Gastrocnemius medialis (tissue), 4 donors: ENCODE measurements at regions of chr2 and their contacts with region 1.

Region 1: GRCh38 chr2:213157242-213157641 is 5.8 kb upstream of the IKZF2 start:
- DNase-seq: no peak
- ATAC-seq: no peak
- H3K4me3 ChIP-seq: no peak overlapping the region
- H3K27ac ChIP-seq: no peak overlapping the region
- H3K4me1 ChIP-seq: peaks cover 7 to 12% of the 10 kb centered on the region in 2 donors
- H3K27me3 ChIP-seq: no peaks in the 10 kb centered on the region
- CTCF ChIP-seq: no peak
- POLR2A ChIP-seq: no peak

Region 2: DNA sequence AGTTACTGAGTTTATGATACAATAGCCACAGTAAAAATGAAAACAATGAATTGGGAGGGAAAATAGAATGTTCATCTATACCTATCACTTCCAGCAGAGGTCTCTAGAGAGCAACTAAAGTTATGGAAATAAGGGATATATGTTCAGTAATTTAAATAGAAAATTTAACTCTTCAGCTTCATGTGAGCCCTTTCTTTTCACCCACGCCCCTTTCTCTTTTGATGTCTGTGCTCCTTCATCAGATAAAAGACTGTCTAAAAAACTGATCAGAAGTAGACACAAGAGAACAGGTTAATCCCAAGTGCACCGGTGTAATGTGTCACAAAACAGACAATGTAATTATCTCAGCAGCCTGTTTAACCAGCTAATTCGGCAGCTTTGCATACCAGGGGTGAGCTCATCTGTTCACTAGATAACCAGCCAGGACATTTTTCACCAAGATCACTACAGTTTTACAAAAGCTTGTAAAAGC is 380.2 kb before region 1 on chr2:
- in situ Hi-C with region 1: loop called (anchors 5 to 10 kb)
- intact Hi-C with region 1: no loop called
- DNase-seq: no peak
- ATAC-seq: no peak
- H3K4me3 ChIP-seq: peak overlapping the region in 1 of 4 donors; percentile 22
- H3K27ac ChIP-seq: no peak overlapping the region
- H3K4me1 ChIP-seq: no peaks in the 10 kb centered on the region
- H3K27me3 ChIP-seq: no peaks in the 10 kb centered on the region
- CTCF ChIP-seq: peak in 4 of 5 experiments; percentile 48 to 66 (median 63)
- POLR2A ChIP-seq: no peak

Region 3: GRCh38 chr2:212863185-212863588 is 294.1 kb before region 1 on chr2:
- in situ Hi-C with region 1: no loop called
- intact Hi-C with region 1: loop called (anchors 2 kb)
- DNase-seq: no peak
- ATAC-seq: no peak
- H3K4me3 ChIP-seq: no peak overlapping the region
- H3K27ac ChIP-seq: no peak overlapping the region
- H3K4me1 ChIP-seq: no peaks in the 10 kb centered on the region
- H3K27me3 ChIP-seq: no peaks in the 10 kb centered on the region
- CTCF ChIP-seq: peak in 3 of 5 experiments; percentile 32 to 36 (median 33)
- POLR2A ChIP-seq: no peak

Region 4: GRCh38 chr2:213443921-213444320 is 286.7 kb after region 1 on chr2:
- in situ Hi-C with region 1: no loop called
- intact Hi-C with region 1: no loop called
- DNase-seq: no peak
- ATAC-seq: no peak
- H3K4me3 ChIP-seq: no peak overlapping the region
- H3K27ac ChIP-seq: no peak overlapping the region
- H3K4me1 ChIP-seq: no peaks in the 10 kb centered on the region
- H3K27me3 ChIP-seq: no peaks in the 10 kb centered on the region
- CTCF ChIP-seq: no peak
- POLR2A ChIP-seq: no peak